ENCODE measurements at regions of chr15 and their contacts with region 1.

Region 1: GRCh38 chr15:73225358-73226015 is 143.3 kb downstream of the HCN4 start:
- DNase-seq: peak; percentile 68
- ATAC-seq: peak; percentile 78
- H3K4me3 Mint-ChIP-seq: no peak overlapping the region
- H3K27ac Mint-ChIP-seq: no peak overlapping the region
- H3K4me1 Mint-ChIP-seq: peaks cover 12% of the 10 kb centered on the region
- H3K27me3 Mint-ChIP-seq: peaks cover 3% of the 10 kb centered on the region

Region 2: GRCh38 chr15:73142802-73143762 is 82.4 kb before region 1 on chr15:
- CTCF ChIA-PET with region 1: no interaction called
- POLR2A ChIA-PET with region 1: no interaction called
- intact Hi-C with region 1: loop called in 1 of 2 experiments (anchors 5 kb)
- DNase-seq: peak; percentile 12
- ATAC-seq: peak; percentile 81
- H3K4me3 Mint-ChIP-seq: no peak overlapping the region
- H3K27ac Mint-ChIP-seq: peak overlapping the region; percentile 87
- H3K4me1 Mint-ChIP-seq: peaks cover 43% of the 10 kb centered on the region
- H3K27me3 Mint-ChIP-seq: no peaks in the 10 kb centered on the region

Measured in activated CD4-positive, alpha-beta T cell treated with anti-CD3 and anti-CD28 coated beads for 36 hours (primary cell).